Transverse colon (tissue), 4 donors: ENCODE measurements at regions of chr12 and their contacts with region 1.

Region 1: DNA sequence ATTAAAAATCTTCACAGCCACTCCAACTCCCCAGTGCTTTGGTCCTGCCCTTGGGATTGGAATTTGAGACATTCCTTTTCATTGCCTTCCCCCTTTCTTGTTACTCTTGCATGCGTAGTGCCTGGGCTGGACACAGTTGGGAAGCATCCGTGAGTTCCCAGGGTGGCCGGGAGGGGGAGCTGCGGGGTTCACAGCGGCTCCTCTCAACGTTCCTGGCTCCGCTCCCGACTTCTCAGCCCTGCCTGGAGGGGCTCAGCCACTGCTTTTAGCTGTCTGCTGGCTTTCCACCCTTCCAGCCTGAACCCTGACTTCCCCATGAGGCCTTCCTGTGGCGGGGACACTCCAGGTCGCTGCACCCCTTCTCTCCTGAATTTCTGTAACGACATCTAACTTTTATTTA is 3.2 kb downstream of the TEX52 start:
- DNase-seq: peak; percentile 76
- H3K4me3 ChIP-seq: no peak overlapping the region
- H3K27ac ChIP-seq: no peak overlapping the region
- H3K4me1 ChIP-seq: peaks cover 0 to 33% (median 14%) of the 10 kb centered on the region in 4 donors
- H3K27me3 ChIP-seq: no peaks in the 10 kb centered on the region
- CTCF ChIP-seq: peak; percentile 69 to 82 (median 78)
- EP300 ChIP-seq: no peak
- POLR2A ChIP-seq: no peak

Region 2: GRCh38 chr12:2877047-2877952 is 23.7 kb after region 1 on chr12 and contains the starts of genes FOXM1 and RHNO1:
- in situ Hi-C with region 1: no loop called
- intact Hi-C with region 1: loop called (anchors 1 kb)
- DNase-seq: peak; percentile 93
- H3K4me3 ChIP-seq: peak within 1 kb of the TSS; percentile 75 to 95 (median 88)
- H3K27ac ChIP-seq: peak within 1 kb of the TSS; percentile 93 to 97 (median 95)
- H3K4me1 ChIP-seq: peaks cover 11 to 23% (median 15%) of the 10 kb centered on the region in 4 donors
- H3K27me3 ChIP-seq: no peaks in the 10 kb centered on the region
- CTCF ChIP-seq: peak in 1 of 5 experiments; percentile 10
- EP300 ChIP-seq: no peak
- POLR2A ChIP-seq: peak; percentile 71
- total RNA-seq, gene FOXM1: 1.6 to 5.2 (median 2.2) TPM in 3 of 4 donors, not detected in the other
- total RNA-seq, gene RHNO1: 5.4 to 16.8 (median 8.6) TPM

Region 3: GRCh38 chr12:2944401-2945047 is 90.9 kb after region 1 on chr12:
- in situ Hi-C with region 1: no loop called
- intact Hi-C with region 1: loop called (anchors 10 kb)
- DNase-seq: peak; percentile 63
- H3K4me3 ChIP-seq: peak overlapping the region in 2 of 4 donors; percentile 16 to 31
- H3K27ac ChIP-seq: no peak overlapping the region
- H3K4me1 ChIP-seq: peaks cover 0 to 4% (median 0%) of the 10 kb centered on the region in 4 donors
- H3K27me3 ChIP-seq: no peaks in the 10 kb centered on the region
- CTCF ChIP-seq: peak; percentile 69 to 79 (median 70)
- EP300 ChIP-seq: no peak
- POLR2A ChIP-seq: no peak

Region 4: GRCh38 chr12:3041558-3042164 is 188.0 kb after region 1 on chr12:
- in situ Hi-C with region 1: loop called (anchors 25 kb)
- intact Hi-C with region 1: loop called (anchors 5 kb)
- DNase-seq: peak; percentile 68
- H3K4me3 ChIP-seq: no peak overlapping the region
- H3K27ac ChIP-seq: no peak overlapping the region
- H3K4me1 ChIP-seq: no peaks in the 10 kb centered on the region
- H3K27me3 ChIP-seq: no peaks in the 10 kb centered on the region
- CTCF ChIP-seq: peak; percentile 42 to 67 (median 59)
- EP300 ChIP-seq: no peak
- POLR2A ChIP-seq: no peak

Region 5: DNA sequence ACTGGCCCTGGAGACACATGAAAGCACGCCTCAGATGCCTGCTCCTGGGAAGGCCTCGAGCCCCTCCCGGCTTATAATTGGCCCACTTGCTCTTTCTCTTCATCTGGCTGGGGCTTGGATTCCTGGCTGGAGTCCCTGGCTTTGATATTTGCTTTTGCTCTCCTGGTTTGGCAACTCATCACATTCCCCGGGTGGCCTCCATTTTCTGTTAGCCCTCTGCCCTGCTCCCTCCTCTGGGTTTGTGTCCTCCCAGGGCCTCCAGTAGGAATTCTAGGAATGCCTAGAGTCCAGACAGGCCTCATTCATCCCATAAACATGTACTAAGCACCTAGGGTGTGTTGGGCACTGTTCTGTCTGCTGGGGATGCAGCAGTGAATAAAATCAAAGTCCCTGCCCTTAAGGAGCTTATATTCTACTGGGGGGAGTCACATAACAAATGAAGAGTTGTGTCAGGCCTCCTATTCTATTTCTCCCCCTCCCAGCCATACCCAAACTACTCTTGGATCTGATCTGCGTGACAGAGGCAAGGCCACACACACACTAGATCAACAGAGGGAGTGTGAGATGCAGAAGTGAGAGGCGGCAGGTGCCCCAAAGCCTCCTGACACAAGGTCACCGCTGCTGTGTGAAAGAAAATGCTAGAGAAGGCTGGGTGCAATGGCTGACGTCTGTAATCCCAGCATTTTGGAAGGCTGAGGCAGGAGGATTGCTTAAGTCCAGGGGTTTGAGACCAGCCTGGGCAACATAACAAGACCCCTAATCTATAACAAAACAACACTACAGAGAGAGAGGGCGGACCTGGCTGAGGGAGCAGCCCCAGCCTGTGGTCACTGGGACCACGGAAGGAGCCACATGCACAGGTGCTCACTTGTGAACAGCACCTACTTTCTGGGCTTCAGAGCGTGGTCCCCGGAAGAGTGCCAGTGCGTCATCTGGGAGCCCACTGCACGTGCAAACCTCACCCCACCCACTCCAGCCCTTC is 202.4 kb after region 1 on chr12:
- in situ Hi-C with region 1: no loop called
- intact Hi-C with region 1: no loop called
- DNase-seq: no peak
- H3K4me3 ChIP-seq: no peak overlapping the region
- H3K27ac ChIP-seq: peak overlapping the region in 3 of 4 donors; percentile 32 to 75 (median 63)
- H3K4me1 ChIP-seq: peaks cover 3 to 12% (median 4%) of the 10 kb centered on the region in 4 donors
- H3K27me3 ChIP-seq: no peaks in the 10 kb centered on the region
- CTCF ChIP-seq: no peak
- EP300 ChIP-seq: no peak
- POLR2A ChIP-seq: no peak